Heart left ventricle (tissue), 16 donors: ENCODE measurements at regions of chr17 and their contacts with region 1.

Region 1: DNA sequence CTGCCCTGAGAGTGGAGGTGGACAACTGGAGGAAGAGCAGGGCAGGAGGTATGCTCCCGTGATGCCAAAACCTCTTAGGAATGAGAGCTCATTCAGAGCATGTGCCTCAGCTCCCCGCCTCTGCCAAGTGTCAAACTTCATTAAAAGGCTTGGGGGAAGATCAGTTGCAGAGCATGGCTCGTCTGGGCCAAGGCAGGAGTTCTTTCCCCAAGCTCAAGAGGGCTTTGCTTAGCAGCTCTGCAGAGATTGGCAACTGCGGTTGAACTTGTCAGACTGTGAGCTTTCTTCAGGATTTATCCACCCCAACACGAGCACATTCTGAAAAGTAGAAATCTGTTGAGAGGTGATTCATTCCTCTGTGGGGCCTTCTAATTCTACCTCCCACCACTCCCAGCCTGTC is 248.1 kb downstream of the HS3ST3A1 start:
- DNase-seq: peak; percentile 20 to 63 (median 55)
- ATAC-seq: peak; percentile 64 to 83 (median 72)
- H3K4me3 ChIP-seq: no peak overlapping the region
- H3K27ac ChIP-seq: peak overlapping the region in 1 of 12 donors; percentile 52
- H3K4me1 ChIP-seq: peaks cover 0 to 11% (median 0%) of the 10 kb centered on the region in 12 donors
- H3K27me3 ChIP-seq: no peaks in the 10 kb centered on the region
- CTCF ChIP-seq: no peak
- POLR2A ChIP-seq: no peak

Region 2: GRCh38 chr17:13415807-13416416 is 62.3 kb after region 1 on chr17:
- intact Hi-C with region 1: loop called in 2 of 10 experiments (anchors 5 to 10 kb)
- DNase-seq: peak; percentile 48 to 73 (median 68)
- ATAC-seq: peak; percentile 58 to 88 (median 84)
- H3K4me3 ChIP-seq: no peak overlapping the region
- H3K27ac ChIP-seq: peak overlapping the region in 8 of 12 donors; percentile 18 to 73 (median 38)
- H3K4me1 ChIP-seq: peaks cover 0 to 25% (median 11%) of the 10 kb centered on the region in 12 donors
- H3K27me3 ChIP-seq: peaks cover 0 to 2% (median 0%) of the 10 kb centered on the region in 9 donors
- CTCF ChIP-seq: peak in 1 of 12 donors; percentile 10
- POLR2A ChIP-seq: no peak

Region 3: GRCh38 chr17:13484020-13484419 is 130.4 kb after region 1 on chr17:
- intact Hi-C with region 1: no loop called
- DNase-seq: no peak
- ATAC-seq: no peak
- H3K4me3 ChIP-seq: no peak overlapping the region
- H3K27ac ChIP-seq: no peak overlapping the region
- H3K4me1 ChIP-seq: no peaks in the 10 kb centered on the region
- H3K27me3 ChIP-seq: no peaks in the 10 kb centered on the region
- CTCF ChIP-seq: no peak
- POLR2A ChIP-seq: no peak